ENCODE measurements at regions of chr17 and their contacts with region 1.

Region 1: DNA sequence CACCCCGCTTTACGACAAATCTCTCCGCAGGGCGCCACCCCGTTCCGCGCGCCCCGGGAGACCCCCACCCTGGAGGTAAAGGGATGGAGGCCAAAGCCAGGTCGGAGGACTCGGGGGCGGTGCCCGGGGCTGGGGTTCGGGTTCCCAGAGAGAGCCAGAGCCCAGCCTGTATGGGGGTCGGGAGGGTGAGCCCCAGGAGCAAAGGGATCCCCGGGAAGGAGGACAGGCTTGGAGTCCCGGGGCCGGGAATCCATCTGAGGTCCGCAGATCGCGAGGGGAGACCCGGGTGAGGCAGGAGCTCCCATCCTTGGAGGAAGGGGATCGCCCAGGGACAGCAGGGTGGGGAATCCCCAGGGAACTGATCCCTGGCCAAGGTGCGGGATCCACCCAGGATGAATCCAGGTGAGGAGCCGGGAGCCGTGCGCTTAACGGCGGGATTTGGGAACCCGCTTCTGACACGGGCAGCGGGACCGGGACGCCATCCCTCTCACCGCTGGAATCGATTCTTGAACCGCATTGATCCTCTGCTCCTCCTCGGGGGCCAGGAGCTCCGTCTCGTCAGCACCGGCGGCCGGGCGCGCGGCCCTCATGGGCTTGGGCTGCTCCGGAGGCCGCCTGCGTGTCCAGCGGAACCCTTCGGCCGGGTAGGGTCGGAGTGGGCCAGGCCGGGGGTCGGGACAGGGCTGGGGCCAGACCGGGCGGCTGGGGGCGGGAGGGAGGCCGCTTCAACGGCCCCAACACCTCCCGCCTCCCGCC is at the start of gene MMD:
- DNase-seq: peak; percentile 78
- H3K4me3 ChIP-seq: peak within 1 kb of the TSS; percentile 71 to 97 (median 96)
- H3K27ac ChIP-seq: peak within 1 kb of the TSS; percentile 90 to 97 (median 94)
- H3K4me1 ChIP-seq: peaks cover 0 to 39% (median 27%) of the 10 kb centered on the region in 4 donors
- H3K27me3 ChIP-seq: no peaks in the 10 kb centered on the region
- CTCF ChIP-seq: no peak
- EP300 ChIP-seq: peak in 1 of 4 donors; percentile 3
- POLR2A ChIP-seq: peak; percentile 30 to 42
- total RNA-seq, gene MMD: 26.9 to 51.3 (median 34.6) TPM

Region 2: DNA sequence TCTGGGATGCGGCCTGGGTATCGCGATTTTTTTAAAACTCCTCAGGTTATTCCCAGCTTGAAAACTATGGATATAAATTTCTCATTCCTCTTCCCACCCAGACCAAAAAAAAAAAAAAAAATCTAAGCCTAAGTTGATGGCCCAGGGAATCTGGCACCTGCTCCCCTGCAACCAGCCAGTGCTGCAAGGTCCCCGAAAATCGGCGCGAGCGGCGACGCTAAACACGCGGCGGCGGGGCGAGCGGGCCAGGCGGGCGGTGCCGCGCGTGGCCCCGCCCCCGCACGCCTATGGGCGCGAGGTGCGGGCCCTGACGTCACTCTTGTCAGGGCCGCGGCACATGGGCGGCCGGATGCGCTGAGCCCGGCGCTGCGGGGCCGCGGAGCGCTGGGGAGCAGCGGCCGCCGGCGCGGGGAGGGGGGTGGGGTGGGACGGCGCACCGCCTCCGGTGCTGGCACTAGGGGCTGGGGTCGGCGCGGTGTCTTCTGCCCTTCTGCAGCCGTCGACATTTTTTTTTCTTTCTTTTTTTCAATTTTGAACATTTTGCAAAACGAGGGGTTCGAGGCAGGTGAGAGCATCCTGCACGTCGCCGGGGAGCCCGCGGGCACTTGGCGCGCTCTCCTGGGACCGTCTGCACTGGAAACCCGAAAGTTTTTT is 156.6 kb before region 1 on chr17 and contains the start of gene HLF:
- intact Hi-C with region 1: loop called (anchors 10 kb)
- DNase-seq: peak; percentile 93
- H3K4me3 ChIP-seq: peak within 1 kb of the TSS; percentile 70 to 81 (median 74)
- H3K27ac ChIP-seq: peak within 1 kb of the TSS; percentile 88 to 97 (median 95)
- H3K4me1 ChIP-seq: peaks cover 0 to 50% (median 35%) of the 10 kb centered on the region in 4 donors
- H3K27me3 ChIP-seq: no peaks in the 10 kb centered on the region
- CTCF ChIP-seq: no peak
- EP300 ChIP-seq: no peak
- POLR2A ChIP-seq: no peak
- total RNA-seq, gene HLF: 41.7 to 54.0 (median 49.4) TPM

Region 3: DNA sequence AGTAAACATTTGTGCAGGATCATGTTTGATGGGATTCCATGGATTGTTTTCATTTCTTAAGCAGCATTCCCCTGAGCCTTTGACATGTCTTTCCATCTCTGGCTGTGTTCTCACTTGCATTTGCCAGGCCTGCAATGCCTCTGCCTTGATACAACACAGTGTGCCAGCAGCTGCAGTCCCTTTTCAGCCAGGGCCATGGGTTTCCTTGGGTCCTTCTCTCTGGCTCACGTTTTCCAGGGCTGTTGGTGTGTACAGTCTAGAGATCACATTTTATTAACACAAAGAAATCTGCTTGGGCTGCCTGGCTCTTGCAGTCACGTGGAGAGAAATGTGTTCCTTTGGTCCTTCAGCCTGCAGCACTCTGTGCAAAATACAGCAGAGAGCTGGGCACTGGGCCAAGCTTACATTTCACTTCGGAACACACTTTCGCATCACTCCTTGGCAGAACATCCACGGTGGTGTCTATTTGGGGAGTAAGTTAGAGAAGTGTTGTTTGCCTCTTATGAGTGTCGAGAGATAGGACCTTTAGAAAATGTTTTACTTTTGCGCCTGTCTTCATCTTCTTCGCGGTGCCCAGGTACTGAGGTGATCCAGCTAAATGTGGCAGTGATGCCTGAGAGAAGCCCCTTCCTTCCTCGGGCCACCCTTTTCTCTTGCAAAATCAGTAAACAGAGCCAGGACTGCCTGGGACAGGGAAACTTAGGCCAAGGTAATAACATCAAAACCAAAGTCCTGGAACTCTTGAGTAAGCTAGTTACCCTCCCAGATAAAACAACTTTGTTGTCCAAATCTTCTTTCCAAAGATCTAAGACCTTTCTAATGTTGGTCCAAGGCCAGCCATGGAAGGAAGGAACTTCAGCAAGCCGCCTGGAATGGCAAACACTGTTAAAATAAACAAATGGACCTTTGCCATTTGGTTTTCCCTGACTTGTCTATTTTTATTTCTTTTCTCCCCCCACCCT is 135.7 kb before region 1 on chr17:
- intact Hi-C with region 1: loop called (anchors 5 kb)
- DNase-seq: peak; percentile 100
- H3K4me3 ChIP-seq: peak overlapping the region in 2 of 4 donors; percentile 2 to 9
- H3K27ac ChIP-seq: peak overlapping the region; percentile 88 to 97 (median 91)
- H3K4me1 ChIP-seq: peaks cover 0 to 89% (median 85%) of the 10 kb centered on the region in 4 donors
- H3K27me3 ChIP-seq: no peaks in the 10 kb centered on the region
- CTCF ChIP-seq: no peak
- EP300 ChIP-seq: peak; percentile 46 to 90 (median 79)
- POLR2A ChIP-seq: no peak

Region 4: DNA sequence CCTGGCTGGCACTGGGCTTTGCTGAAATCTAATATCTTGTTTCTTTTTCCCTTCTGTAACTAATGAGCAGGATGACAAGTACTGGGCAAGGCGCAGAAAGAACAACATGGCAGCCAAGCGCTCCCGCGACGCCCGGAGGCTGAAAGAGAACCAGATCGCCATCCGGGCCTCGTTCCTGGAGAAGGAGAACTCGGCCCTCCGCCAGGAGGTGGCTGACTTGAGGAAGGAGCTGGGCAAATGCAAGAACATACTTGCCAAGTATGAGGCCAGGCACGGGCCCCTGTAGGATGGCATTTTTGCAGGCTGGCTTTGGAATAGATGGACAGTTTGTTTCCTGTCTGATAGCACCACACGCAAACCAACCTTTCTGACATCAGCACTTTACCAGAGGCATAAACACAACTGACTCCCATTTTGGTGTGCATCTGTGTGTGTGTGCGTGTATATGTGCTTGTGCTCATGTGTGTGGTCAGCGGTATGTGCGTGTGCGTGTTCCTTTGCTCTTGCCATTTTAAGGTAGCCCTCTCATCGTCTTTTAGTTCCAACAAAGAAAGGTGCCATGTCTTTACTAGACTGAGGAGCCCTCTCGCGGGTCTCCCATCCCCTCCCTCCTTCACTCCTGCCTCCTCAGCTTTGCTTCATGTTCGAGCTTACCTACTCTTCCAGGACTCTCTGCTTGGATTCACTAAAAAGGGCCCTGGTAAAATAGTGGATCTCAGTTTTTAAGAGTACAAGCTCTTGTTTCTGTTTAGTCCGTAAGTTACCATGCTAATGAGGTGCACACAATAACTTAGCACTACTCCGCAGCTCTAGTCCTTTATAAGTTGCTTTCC is 100.5 kb before region 1 on chr17:
- intact Hi-C with region 1: no loop called
- DNase-seq: no peak
- H3K4me3 ChIP-seq: no peak overlapping the region
- H3K27ac ChIP-seq: peak overlapping the region in 1 of 4 donors; percentile 24
- H3K4me1 ChIP-seq: peaks cover 0 to 11% (median 10%) of the 10 kb centered on the region in 4 donors
- H3K27me3 ChIP-seq: no peaks in the 10 kb centered on the region
- CTCF ChIP-seq: no peak
- EP300 ChIP-seq: no peak
- POLR2A ChIP-seq: no peak

Region 5: GRCh38 chr17:55452139-55452790 is 30.9 kb after region 1 on chr17:
- intact Hi-C with region 1: loop called (anchors 2 kb)
- DNase-seq: peak; percentile 89
- H3K4me3 ChIP-seq: no peak overlapping the region
- H3K27ac ChIP-seq: peak overlapping the region; percentile 67 to 83 (median 78)
- H3K4me1 ChIP-seq: peaks cover 0 to 65% (median 56%) of the 10 kb centered on the region in 4 donors
- H3K27me3 ChIP-seq: no peaks in the 10 kb centered on the region
- CTCF ChIP-seq: no peak
- EP300 ChIP-seq: peak in 3 of 4 donors; percentile 18 to 35 (median 34)
- POLR2A ChIP-seq: no peak

Region 6: GRCh38 chr17:55496094-55496881 is 74.9 kb after region 1 on chr17:
- intact Hi-C with region 1: loop called (anchors 5 kb)
- DNase-seq: no peak
- H3K4me3 ChIP-seq: no peak overlapping the region
- H3K27ac ChIP-seq: peak overlapping the region in 2 of 4 donors; percentile 6 to 35
- H3K4me1 ChIP-seq: peaks cover 0 to 11% (median 2%) of the 10 kb centered on the region in 4 donors
- H3K27me3 ChIP-seq: no peaks in the 10 kb centered on the region
- CTCF ChIP-seq: no peak
- EP300 ChIP-seq: no peak
- POLR2A ChIP-seq: no peak